Sciatic nerve (tissue), 2 donors: ENCODE measurements at regions of chr22 and their contacts with region 1.

Region 1: DNA sequence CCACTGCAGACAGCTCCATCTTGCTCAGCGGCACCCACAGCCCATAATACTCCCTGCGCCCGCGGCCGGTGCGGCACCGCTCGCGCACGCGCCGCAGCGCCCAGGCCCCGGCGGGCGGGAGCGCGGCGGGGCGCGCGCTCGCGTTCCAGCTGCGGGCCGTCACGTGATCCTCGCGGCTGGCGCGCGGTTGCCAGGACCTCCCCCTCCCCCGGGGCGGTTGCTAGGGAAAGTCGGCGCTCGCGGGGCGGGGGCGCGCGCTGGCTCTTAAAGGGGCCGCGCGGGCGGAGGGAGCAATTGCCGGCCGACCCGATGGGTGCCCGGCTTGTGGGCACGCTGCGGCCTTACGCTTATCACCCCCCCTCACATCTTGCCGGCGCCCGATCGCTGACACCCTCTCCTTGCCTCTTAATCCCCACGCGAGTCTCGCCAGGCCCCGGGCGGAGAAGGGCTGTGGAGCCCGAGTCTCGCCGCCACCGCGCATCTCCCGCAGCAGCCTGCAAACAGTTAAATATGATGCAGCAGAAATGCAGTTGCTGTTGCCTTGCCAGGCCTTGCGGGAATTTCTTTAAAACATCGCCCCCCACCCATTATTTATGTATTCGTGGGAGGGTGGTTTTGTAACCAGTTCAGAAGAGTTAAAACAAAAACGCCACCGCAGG is at the start of gene CBX6:
- DNase-seq: peak; percentile 98
- ATAC-seq: peak; percentile 91
- total RNA-seq, gene CBX6: 83.5 TPM

Region 2: GRCh38 chr22:38766076-38766777 is 106.1 kb before region 1 on chr22:
- intact Hi-C with region 1: loop called (anchors 10 kb)
- DNase-seq: no peak
- ATAC-seq: peak; percentile 44

Region 3: DNA sequence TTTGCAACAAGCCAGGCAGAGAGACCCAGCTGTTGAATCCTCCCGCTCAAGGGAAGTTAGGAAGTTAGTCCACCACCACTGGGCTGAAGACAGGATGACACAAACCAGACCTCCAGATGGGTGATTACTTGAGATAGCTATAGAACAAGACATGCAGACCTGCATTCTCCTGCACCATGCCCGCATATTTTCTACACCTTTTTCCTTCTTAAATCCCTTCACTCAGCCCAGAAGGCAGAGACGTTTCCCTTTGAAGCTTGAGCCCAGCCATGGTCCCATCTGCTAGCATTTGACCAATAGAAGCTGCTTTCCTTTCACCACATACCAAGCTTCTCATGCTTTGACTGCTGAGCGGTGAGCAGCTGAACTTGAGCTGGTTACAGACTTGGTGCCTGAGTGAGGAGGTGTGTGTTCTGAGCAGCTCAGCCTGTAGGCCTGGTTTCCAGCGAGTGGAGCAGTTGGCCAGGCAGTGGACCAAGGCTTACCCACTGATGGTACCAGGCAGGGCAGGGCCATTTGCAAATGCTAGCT is 28.9 kb after region 1 on chr22:
- intact Hi-C with region 1: no loop called
- DNase-seq: no peak
- ATAC-seq: no peak

Region 4: DNA sequence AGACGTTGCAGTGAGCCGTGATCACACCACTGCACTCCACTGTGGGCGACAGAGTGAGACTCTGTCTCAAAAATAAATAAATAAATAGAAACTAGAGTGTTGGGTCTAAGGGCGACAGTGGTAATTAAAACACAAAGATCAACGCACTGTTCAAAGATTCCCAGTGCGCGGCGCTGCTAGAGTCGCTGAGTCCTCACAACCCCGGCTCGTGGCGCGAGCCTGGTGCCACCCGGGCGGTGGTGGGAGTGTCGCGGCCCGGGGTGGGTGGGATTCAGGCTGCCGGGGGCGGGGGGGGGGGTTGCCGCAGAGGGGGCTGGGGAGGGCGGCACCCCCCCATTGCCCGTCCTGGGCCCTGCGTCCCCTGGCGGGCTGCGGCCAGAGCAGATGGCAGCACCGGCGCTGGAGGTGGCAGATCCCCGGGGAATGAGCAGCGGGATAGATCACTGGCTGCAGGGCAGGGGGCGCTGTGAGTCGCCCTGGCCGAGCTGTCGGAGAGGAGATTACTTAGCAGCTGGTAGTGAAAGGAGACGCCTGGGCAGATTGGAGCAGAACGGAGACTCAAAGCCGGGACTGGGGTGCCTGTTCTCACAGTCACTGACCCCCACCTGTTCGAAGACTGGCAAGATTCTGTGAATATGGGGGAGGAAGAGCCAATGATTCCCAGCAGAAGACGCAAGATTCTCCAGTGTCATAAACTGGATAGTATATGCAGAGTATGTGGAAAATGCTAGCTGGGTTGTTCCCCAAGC is 54.9 kb after region 1 on chr22:
- intact Hi-C with region 1: loop called (anchors 10 kb)
- DNase-seq: peak; percentile 82
- ATAC-seq: peak; percentile 38

Region 5: DNA sequence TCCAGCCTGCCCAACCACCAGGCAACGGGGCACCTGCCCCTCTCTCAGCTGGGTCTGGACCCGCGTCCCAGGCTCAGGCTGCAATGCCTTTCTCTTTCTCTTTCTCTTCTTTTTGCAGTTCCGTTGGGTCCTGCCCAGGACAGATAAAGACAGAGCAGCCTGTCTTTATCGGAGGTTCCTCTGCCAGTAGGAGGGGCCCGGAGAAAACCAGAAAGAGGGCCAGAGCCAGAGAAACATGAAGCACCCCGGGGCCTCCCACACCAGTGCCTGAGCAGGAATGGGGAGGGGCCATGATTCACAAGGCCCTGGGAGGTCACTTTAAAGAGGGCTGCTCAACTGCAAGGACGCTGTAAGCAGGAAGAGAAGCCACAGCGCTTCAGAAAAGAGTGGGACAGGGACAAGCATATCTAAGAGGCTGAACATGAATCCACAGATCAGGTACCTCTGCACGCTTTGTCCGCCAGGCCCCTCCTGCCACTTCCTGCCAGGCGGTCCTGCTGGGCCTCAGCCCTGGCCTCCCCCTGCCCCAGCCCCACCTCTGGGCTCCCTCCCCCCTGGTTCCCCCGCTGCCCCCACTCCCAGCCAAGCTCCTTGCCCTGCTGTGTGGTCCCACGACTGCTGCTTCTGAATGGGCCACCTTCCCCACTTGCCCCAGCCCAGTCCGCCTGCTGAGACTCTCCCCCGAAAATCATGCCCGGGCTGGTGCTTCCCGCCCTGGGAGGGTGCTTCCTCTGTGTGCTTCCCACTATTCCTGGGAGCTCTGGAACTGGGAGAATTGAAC is 141.8 kb after region 1 on chr22 and contains the start of gene APOBEC3C:
- intact Hi-C with region 1: loop called (anchors 10 kb)
- DNase-seq: peak; percentile 86
- ATAC-seq: peak; percentile 97
- total RNA-seq, gene APOBEC3C: 25.1 TPM

Region 6: GRCh38 chr22:39130892-39131850 is 258.9 kb after region 1 on chr22:
- intact Hi-C with region 1: loop called (anchors 5 kb)
- DNase-seq: peak; percentile 55
- ATAC-seq: peak; percentile 42

Region 7: DNA sequence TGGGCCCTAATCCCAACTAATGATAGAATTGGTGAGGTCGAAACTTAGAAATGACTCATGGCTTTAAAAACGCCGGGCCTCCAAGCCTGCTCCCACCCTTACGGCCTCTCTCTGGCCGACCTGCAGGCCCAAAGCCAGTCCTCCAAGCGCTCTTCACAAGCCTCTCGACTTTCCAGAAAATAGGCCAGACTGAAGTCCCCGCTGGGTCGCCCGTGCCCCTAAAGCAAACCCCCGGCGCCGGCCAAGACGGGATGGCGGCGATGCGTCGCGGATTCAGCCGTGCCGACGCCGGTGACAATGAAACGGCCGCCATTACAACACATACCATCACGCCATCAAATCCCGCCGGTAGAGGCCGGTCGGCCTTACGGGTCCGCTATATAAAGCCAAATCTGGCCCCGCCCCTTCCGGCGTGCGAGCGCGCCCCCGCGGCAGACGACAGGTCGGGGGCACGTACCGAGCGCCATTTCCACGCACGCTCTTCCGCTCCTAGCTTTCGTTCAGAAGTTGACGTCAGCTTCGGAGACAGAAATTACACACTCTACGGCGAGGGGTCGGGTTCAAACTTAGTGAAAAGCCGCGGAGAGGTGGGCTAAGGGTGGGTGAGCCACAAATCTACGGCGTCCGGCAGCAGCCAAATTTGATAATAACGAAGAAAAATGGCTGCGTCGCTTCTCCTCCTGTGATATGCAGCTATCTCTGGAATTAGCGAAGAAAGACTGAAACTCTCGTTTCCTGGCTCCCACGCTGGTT is 447.1 kb after region 1 on chr22 and contains the start of gene RPL3:
- intact Hi-C with region 1: loop called (anchors 10 kb)
- DNase-seq: peak; percentile 99
- ATAC-seq: peak; percentile 95
- total RNA-seq, gene RPL3: 1,341 TPM